K562 (cell line): ENCODE measurements at regions of chr4 and their contacts with region 1.

Region 1: DNA sequence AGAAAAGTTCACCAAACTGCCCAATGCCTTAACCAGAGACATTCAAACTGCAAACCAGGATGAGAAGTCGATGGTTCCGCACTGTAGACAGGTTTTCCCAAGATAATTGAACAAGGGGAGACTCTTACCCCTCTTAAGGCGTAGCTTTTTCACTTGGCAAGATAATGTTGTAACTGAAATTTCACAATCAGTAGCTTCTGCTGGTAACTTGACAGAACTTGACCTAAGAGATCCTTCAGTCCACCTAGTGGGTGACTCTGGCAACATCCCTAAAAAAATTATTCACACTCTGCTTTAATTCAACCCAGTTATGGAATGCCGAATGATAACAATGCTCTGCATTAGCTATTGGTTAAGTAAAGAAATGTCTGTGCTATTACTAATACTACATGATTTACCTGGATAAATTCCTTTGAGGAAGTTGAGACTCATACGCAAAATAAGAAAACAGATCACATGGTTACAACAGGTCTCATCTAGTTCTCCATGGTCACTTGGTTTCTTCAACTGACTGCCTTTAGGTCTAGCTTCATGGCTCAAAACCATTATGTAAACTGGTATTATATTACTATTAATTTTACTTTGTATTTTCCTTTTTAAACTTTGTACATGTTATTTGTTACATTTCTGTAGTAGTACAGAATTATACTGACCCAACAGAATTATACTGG is 9.1 kb downstream of the ELF2 start:
- DNase-seq: peak in 3 of 4 experiments; percentile 18 to 69 (median 62)
- ATAC-seq: peak; percentile 76
- H3K4me3 ChIP-seq: no peak overlapping the region
- H3K27ac ChIP-seq: peak overlapping the region; percentile 64
- H3K4me1 ChIP-seq: peaks cover 11 to 27% of the 10 kb centered on the region in 2 experiments
- H3K27me3 ChIP-seq: no peaks in the 10 kb centered on the region
- CTCF ChIP-seq: peak; percentile 49 to 77 (median 75); a peak in 5 of 6 replicates
- EP300 ChIP-seq: no peak
- POLR2A ChIP-seq: no peak
- RAD21 ChIP-seq: peak; percentile 68 to 74

Region 2: GRCh38 chr4:139099366-139099982 is 68.4 kb before region 1 on chr4:
- CTCF ChIA-PET with region 1: interaction called, 5 read pairs
- POLR2A ChIA-PET with region 1: no interaction called
- in situ Hi-C with region 1: loop called (anchors 10 kb)
- intact Hi-C with region 1: loop called (anchors 1 kb)
- DNase-seq: peak; percentile 70 to 90 (median 71)
- ATAC-seq: peak; percentile 95
- H3K4me3 ChIP-seq: no peak overlapping the region
- H3K27ac ChIP-seq: no peak overlapping the region
- H3K4me1 ChIP-seq: no peaks in the 10 kb centered on the region; a peak in 1 of 5 replicates
- H3K27me3 ChIP-seq: no peaks in the 10 kb centered on the region
- CTCF ChIP-seq: peak; percentile 81 to 92 (median 84)
- EP300 ChIP-seq: no peak
- POLR2A ChIP-seq: no peak
- RAD21 ChIP-seq: peak; percentile 82 to 91

Region 3: DNA sequence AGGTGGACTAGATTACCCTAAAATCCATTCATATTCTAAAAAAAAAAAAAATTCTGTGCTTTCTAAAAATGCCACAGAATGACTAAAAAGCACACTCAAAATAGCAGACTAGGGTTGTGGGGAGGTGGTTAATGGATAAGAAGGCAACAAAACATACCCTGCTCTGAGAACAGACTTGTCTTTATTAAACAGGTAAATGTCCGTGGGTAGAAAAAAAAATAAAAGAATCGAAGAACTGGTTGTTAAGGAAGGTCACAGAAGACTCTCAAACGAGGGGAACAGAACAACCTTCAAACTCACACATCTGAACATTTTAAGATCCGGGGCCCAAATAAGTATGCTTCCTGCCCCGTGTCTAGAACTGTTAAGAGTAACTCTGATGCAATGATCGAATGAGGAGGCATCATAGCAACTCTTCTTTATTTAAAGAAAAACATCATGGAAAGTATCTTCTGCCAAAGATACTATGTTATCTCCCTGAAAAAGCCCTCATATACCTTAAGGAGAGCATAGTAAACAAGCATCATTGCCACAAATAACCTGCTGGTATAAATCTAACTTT is 59.3 kb before region 1 on chr4:
- CTCF ChIA-PET with region 1: no interaction called
- POLR2A ChIA-PET with region 1: no interaction called
- in situ Hi-C with region 1: loop called (anchors 10 kb)
- intact Hi-C with region 1: no loop called
- DNase-seq: no peak
- ATAC-seq: peak; percentile 73
- H3K4me3 ChIP-seq: no peak overlapping the region
- H3K27ac ChIP-seq: no peak overlapping the region
- H3K4me1 ChIP-seq: no peaks in the 10 kb centered on the region
- H3K27me3 ChIP-seq: no peaks in the 10 kb centered on the region
- CTCF ChIP-seq: no peak
- EP300 ChIP-seq: no peak
- POLR2A ChIP-seq: no peak
- RAD21 ChIP-seq: no peak

Region 4: DNA sequence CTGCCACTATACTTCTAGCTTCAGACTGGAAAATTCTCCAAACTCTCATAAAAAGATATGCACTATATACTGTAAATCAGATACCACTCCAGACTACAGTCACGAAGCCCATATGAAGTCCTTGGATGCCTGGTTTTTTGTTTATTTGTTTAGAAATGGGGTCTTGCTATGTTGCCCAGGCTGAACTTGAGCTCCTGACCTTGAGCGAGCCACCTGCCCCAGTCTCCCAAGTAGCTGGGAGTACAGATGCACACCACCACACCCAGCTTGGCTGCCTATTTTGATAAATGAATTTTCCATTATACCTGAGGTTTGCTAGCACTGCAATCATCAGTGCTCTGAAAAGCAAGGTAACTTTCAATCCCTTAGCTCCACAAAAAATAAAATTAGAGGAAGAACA is 44.0 kb before region 1 on chr4:
- CTCF ChIA-PET with region 1: no interaction called
- POLR2A ChIA-PET with region 1: no interaction called
- in situ Hi-C with region 1: no loop called
- intact Hi-C with region 1: no loop called
- DNase-seq: no peak
- ATAC-seq: no peak
- H3K4me3 ChIP-seq: no peak overlapping the region
- H3K27ac ChIP-seq: no peak overlapping the region
- H3K4me1 ChIP-seq: no peaks in the 10 kb centered on the region
- H3K27me3 ChIP-seq: no peaks in the 10 kb centered on the region
- CTCF ChIP-seq: no peak
- EP300 ChIP-seq: no peak
- POLR2A ChIP-seq: no peak
- RAD21 ChIP-seq: no peak

Region 5: GRCh38 chr4:139704915-139705485 is 537.1 kb after region 1 on chr4:
- CTCF ChIA-PET with region 1: no interaction called
- POLR2A ChIA-PET with region 1: no interaction called
- in situ Hi-C with region 1: no loop called
- intact Hi-C with region 1: no loop called
- DNase-seq: peak; percentile 18 to 41 (median 34)
- ATAC-seq: peak; percentile 72
- H3K4me3 ChIP-seq: no peak overlapping the region
- H3K27ac ChIP-seq: no peak overlapping the region
- H3K4me1 ChIP-seq: no peaks in the 10 kb centered on the region
- H3K27me3 ChIP-seq: no peaks in the 10 kb centered on the region
- CTCF ChIP-seq: peak; percentile 30 to 41 (median 38); a peak in 5 of 6 replicates
- EP300 ChIP-seq: no peak
- POLR2A ChIP-seq: no peak
- RAD21 ChIP-seq: peak in 1 of 2 experiments; percentile 20; a peak in 2 of 4 replicates